Sigmoid colon (tissue), 7 donors: ENCODE measurements at regions of chr10 and their contacts with region 1.

Region 1: DNA sequence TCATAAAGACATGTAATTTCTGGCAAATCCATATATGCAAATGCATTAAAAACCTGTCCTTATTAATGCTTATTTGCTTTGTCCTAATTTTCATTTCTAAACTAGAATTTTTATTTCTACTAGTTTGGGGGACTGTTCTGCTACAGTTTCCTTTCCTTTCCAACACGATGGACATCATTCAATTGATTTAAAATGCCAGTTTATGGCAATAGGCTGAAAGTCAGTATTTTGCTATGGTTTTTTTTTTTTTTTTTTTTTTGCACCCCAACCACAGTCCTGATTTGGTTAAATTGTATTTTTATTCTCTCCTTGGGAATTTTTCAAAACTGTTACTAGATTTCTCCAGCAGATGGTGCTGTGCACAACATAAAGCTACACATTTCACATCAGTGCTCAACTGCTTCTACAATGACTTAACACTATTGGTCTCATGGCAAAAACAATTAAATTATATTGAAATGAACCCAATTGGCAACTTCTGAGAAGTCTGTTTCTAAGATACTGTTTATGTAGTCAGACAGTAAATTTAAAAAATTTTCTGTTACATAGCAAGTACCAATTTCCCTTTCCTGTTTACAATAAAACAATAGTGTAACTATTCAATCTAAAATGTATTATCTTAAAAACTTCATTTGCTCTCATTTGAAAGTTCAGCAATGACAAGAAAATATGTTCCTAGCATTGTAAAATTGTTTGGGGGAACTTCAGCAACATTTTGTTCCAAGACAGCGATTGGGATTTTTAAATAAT is 193.8 kb upstream of the CCDC6 start:
- DNase-seq: no peak
- H3K4me3 ChIP-seq: no peak overlapping the region
- H3K27ac ChIP-seq: no peak overlapping the region
- H3K4me1 ChIP-seq: peaks cover 0 to 9% (median 3%) of the 10 kb centered on the region in 4 donors
- H3K27me3 ChIP-seq: no peaks in the 10 kb centered on the region
- CTCF ChIP-seq: peak; percentile 16 to 44 (median 42)
- EP300 ChIP-seq: no peak
- POLR2A ChIP-seq: no peak

Region 2: DNA sequence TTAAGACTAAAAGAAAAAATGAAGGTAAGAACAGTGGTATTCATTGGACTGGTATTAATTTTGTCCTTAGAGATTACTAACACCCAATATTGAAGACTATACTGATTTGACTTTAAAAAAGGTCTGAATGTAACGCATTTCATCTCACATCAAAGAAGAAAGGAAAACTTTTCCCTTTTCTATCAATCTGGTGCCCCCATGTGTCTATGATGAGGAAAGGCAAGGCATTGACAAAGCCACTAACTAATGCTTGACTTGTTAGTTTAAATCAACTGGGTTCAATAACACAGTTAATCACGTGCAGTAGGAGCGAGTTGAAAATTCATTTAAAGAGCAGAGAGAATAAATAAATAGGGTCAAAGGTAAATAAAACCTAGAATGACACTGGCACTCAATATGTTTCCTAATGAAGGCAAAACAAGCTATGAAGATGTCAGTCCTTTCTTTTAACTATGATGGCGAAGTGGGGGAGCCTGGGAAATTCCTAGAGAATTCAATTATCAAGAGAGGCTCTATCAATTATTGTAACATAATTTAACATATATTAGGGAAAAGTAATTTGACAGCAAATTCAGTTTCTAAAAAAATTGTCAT is 108.6 kb after region 1 on chr10:
- intact Hi-C with region 1: loop called (anchors 1 kb)
- DNase-seq: no peak
- H3K4me3 ChIP-seq: no peak overlapping the region
- H3K27ac ChIP-seq: no peak overlapping the region
- H3K4me1 ChIP-seq: peaks cover 0 to 5% (median 2%) of the 10 kb centered on the region in 4 donors
- H3K27me3 ChIP-seq: no peaks in the 10 kb centered on the region
- CTCF ChIP-seq: peak; percentile 64 to 81 (median 74)
- EP300 ChIP-seq: no peak
- POLR2A ChIP-seq: no peak

Region 3: GRCh38 chr10:60646966-60647796 is 547.0 kb after region 1 on chr10:
- intact Hi-C with region 1: loop called (anchors 5 kb)
- DNase-seq: no peak
- H3K4me3 ChIP-seq: no peak overlapping the region
- H3K27ac ChIP-seq: no peak overlapping the region
- H3K4me1 ChIP-seq: peaks cover 0 to 3% (median 2%) of the 10 kb centered on the region in 4 donors
- H3K27me3 ChIP-seq: no peaks in the 10 kb centered on the region
- CTCF ChIP-seq: peak; percentile 35 to 74 (median 60)
- EP300 ChIP-seq: no peak
- POLR2A ChIP-seq: no peak